GM13977 (cell line): ENCODE measurements at regions of chr18 and their contacts with region 1.

Region 1: DNA sequence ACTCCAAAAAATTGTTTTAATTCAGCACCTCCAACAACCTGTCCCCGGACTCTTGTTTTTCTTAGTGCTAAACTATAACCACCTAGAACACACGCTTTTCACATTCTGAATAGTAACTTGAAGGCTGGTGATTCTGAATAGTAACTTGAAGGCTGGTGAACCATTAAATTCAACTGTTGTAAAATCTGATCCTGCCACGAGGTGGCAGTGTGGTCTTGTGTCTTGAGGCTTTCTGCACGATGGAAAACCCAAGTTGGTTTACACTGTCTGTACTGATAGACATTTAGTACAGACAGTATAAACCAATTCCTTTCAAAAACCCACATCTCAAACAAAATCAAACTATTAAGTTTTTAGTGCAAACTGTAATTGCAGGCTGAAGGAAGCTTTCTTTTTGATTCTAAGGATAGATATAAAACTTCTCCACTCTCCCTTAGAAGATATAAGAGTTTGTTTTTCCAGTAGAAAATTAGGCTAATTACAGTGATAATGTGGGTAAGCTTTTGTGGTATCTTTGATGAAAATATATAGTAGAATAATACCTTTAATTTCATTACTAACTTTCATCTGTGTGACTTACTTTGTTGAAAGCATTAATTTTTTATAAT is 57.6 kb downstream of the VAPA start:
- DNase-seq: peak; percentile 80
- CTCF ChIP-seq: peak; percentile 79

Region 2: GRCh38 chr18:10519999-10520935 is 548.9 kb after region 1 on chr18:
- in situ Hi-C with region 1: loop called (anchors 5 kb)
- DNase-seq: peak; percentile 69
- CTCF ChIP-seq: peak; percentile 75